Activated CD8-positive, alpha-beta T cell treated with anti-CD3 and anti-CD28 coated beads for 36 hours (primary cell): ENCODE measurements at regions of chr1 and their contacts with region 1.

Region 1: GRCh38 chr1:8848663-8849386 is 29.7 kb downstream of the ENO1 start:
- DNase-seq: peak; percentile 87
- ATAC-seq: peak; percentile 96
- H3K4me3 Mint-ChIP-seq: no peak overlapping the region
- H3K27ac Mint-ChIP-seq: no peak overlapping the region
- H3K4me1 Mint-ChIP-seq: no peaks in the 10 kb centered on the region
- H3K27me3 Mint-ChIP-seq: no peaks in the 10 kb centered on the region
- CTCF ChIP-seq: peak; percentile 96

Region 2: GRCh38 chr1:8671306-8671917 is 177.4 kb before region 1 on chr1:
- CTCF ChIA-PET with region 1: interaction called, 13 read pairs
- POLR2A ChIA-PET with region 1: no interaction called
- intact Hi-C with region 1: no loop called
- DNase-seq: peak; percentile 18
- ATAC-seq: no peak
- H3K4me3 Mint-ChIP-seq: no peak overlapping the region
- H3K27ac Mint-ChIP-seq: no peak overlapping the region
- H3K4me1 Mint-ChIP-seq: peaks cover 44% of the 10 kb centered on the region
- H3K27me3 Mint-ChIP-seq: no peaks in the 10 kb centered on the region
- CTCF ChIP-seq: peak; percentile 81

Region 3: DNA sequence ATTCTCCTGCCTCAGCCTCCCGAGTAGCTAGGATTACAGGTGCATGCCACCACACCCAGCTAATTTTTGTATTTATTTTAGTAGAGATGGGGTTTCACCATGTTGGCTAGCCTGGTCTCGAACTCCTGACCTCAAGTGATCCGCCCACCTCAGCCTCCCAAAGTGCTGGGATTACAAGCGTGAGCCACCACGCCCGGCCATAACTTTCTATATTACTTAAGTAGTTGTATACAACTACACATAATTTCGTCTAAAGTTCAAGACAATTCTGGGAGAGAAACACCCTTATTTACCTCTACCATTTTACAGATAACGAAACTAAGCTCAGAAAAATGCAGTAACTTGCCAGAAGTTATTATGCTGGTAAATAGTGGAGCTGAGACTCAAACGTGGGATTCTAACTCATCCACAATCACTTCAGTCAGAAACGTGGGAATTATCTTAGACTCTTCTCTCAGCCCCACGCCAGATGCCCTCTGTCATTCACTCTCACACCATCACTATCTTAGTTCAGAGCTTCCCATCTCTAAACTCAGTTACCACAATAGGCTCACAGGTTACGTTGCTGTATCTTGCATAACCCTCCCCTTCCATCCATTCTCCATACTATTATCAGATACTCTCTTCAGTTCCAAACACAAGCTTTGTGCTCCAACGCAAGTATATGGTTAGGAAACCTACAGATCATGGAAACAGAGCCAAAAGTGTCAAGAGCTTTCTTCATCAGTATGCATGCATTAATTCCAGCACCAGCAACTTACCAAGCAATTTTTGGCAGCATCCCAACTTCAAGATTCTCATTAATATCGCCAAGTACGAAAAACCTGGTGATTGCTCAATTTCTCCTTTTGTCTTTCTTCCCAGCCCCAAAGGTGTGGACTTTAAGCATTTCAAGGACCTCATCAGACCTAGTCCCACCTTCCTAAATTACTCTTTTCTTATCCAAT is 100.7 kb before region 1 on chr1:
- CTCF ChIA-PET with region 1: interaction called, 12 read pairs
- POLR2A ChIA-PET with region 1: no interaction called
- intact Hi-C with region 1: no loop called
- DNase-seq: no peak
- ATAC-seq: no peak
- H3K4me3 Mint-ChIP-seq: no peak overlapping the region
- H3K27ac Mint-ChIP-seq: no peak overlapping the region
- H3K4me1 Mint-ChIP-seq: peaks cover 18% of the 10 kb centered on the region
- H3K27me3 Mint-ChIP-seq: no peaks in the 10 kb centered on the region
- CTCF ChIP-seq: no peak

Region 4: DNA sequence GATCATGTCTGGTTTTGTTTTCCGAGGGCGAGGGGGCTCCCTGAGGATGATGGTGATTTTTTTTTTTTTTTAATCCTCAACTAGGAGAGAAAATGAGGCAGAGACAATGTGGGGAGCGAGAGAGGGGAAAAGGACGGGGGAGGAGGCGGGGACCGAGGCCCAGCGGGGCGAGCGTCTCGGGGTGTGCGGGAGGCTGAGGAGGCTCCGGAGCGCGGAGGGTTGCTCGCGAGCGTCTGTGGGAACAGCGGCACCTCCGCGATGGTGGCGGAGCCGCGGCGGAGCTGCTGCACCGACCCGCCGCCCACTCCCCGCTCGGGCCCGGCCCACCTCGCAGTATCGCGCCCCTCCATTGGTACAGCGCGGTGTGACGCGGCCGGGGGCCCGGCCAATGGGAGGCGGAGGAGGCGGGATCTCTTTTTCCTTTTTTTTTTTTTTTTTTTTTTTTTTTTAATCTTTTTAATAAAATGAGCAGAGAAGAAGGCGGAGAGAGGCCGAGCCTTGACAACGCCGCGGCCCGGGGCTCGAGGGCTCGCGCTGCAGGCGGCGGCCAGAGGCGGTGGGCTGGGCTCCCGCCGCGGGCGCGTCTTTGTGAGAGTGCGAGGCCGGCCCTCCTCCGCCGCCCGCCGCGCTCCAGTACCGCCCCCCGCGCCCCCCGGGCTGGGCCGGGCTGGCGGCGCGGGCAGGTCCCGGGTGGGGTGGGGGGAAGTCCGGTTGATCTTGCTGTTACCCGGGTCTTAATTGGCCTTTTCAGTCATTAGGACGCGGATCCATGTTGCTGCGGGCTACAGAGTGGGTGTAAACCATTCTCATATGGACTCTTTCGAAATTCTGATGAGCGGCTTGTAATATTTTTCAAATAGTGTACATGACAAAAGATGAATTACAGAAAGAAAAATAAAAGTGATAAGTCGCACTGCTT is 31.2 kb before region 1 on chr1 and contains the start of gene RERE:
- CTCF ChIA-PET with region 1: interaction called, 32 read pairs
- POLR2A ChIA-PET with region 1: no interaction called
- intact Hi-C with region 1: no loop called
- DNase-seq: peak; percentile 95
- ATAC-seq: peak; percentile 95
- H3K4me3 Mint-ChIP-seq: peak within 1 kb of the TSS; percentile 90
- H3K27ac Mint-ChIP-seq: peak within 1 kb of the TSS; percentile 89
- H3K4me1 Mint-ChIP-seq: peaks cover 47% of the 10 kb centered on the region
- H3K27me3 Mint-ChIP-seq: peaks cover 3% of the 10 kb centered on the region
- CTCF ChIP-seq: no peak
- total RNA-seq, gene RERE: 45.8 to 57.1 TPM

Region 5: DNA sequence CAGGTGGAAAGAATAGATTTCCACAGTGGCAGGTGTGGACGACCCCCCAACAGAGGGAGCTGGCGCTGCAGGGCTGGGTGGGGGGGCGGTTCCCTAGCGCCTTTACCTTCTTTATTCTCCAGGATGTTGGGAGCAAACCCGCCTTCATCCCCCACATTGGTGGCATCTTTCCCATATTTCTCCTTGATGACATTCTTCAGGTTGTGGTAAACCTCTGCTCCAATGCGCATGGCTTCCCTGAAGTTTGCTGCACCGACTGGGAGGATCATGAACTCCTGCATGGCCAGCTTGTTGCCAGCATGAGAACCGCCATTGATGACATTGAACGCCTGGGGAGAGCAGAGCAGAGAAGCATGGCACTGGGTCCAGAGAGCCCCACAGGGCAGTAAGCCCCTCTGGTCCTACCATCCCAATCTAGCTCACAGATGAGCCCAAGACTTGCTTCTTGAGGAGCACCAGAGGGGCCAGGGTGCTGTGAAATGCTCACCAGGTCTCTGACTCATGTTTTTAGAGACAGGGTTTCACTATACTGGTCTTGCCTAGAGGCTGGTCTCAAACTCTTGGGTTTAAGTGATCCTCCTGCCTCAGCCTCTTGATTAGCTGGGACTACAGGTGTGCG is 17.5 kb after region 1 on chr1:
- CTCF ChIA-PET with region 1: interaction called, 104 read pairs
- POLR2A ChIA-PET with region 1: interaction called, 197 read pairs
- intact Hi-C with region 1: no loop called
- DNase-seq: no peak
- ATAC-seq: peak; percentile 1
- H3K4me3 Mint-ChIP-seq: peak overlapping the region; percentile 41
- H3K27ac Mint-ChIP-seq: peak overlapping the region; percentile 83
- H3K4me1 Mint-ChIP-seq: peaks cover 66% of the 10 kb centered on the region
- H3K27me3 Mint-ChIP-seq: no peaks in the 10 kb centered on the region
- CTCF ChIP-seq: no peak